Activated T-helper 1 cell treated with anti-CD3 and anti-CD28 coated beads, Interleukin-12 subunit alpha, Interleukin-12 subunit beta, Interleukin-2, Interleukin-4 antibody, amounts not matched to agents 30 ng/mL and 10 ng/mL and 1 ng/mL, durations not matched to agents 14 hours and 24 hours and 36 hours (primary cell): ENCODE measurements at regions of chr11 and their contacts with region 1.

Region 1: GRCh38 chr11:71448257-71449171 is at the start of gene DHCR7:
- DNase-seq: peak; percentile 96
- H3K4me3 Mint-ChIP-seq: peak within 1 kb of the TSS; percentile 92
- H3K27ac Mint-ChIP-seq: peak within 1 kb of the TSS; percentile 93
- H3K4me1 Mint-ChIP-seq: peaks cover 62% of the 10 kb centered on the region
- H3K27me3 Mint-ChIP-seq: no peaks in the 10 kb centered on the region
- total RNA-seq, gene DHCR7: 100 and 106 TPM in 2 replicates

Region 2: GRCh38 chr11:71489311-71490048 is 41.0 kb after region 1 on chr11:
- intact Hi-C with region 1: loop called (anchors 1 kb)
- DNase-seq: peak; percentile 58
- H3K4me3 Mint-ChIP-seq: peak overlapping the region; percentile 63
- H3K27ac Mint-ChIP-seq: peak overlapping the region; percentile 94
- H3K4me1 Mint-ChIP-seq: peaks cover 31% of the 10 kb centered on the region
- H3K27me3 Mint-ChIP-seq: no peaks in the 10 kb centered on the region

Region 3: DNA sequence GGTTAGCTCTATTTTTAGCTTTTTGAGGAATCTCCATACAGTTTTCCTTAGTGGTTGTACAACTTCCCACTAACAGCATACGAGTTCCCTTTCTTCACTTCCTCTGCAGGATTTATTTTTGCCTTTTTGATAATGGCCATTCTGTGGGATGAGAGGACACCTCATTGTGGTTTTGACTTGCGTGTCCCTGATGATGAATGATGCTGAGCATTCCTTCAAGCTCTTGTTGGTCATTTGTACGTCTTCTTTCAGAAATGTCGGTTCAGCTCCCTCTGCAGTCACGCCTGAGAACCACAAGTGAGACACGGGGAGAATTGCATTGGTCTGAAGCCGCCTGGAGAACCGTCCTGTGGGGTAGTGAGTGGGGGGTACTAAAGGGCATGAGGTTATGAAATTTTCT is 114.9 kb after region 1 on chr11:
- intact Hi-C with region 1: loop called (anchors 2 kb)
- DNase-seq: no peak
- H3K4me3 Mint-ChIP-seq: no peak overlapping the region
- H3K27ac Mint-ChIP-seq: no peak overlapping the region
- H3K4me1 Mint-ChIP-seq: no peaks in the 10 kb centered on the region
- H3K27me3 Mint-ChIP-seq: peaks cover 12% of the 10 kb centered on the region

Region 4: GRCh38 chr11:71787098-71787823 is 338.7 kb after region 1 on chr11:
- intact Hi-C with region 1: loop called (anchors 2 kb)
- DNase-seq: peak; percentile 91
- H3K4me3 Mint-ChIP-seq: peak overlapping the region; percentile 97
- H3K27ac Mint-ChIP-seq: peak overlapping the region; percentile 97
- H3K4me1 Mint-ChIP-seq: peaks cover 23% of the 10 kb centered on the region
- H3K27me3 Mint-ChIP-seq: no peaks in the 10 kb centered on the region